ENCODE measurements at regions of chr16 and their contacts with region 1.

Region 1: DNA sequence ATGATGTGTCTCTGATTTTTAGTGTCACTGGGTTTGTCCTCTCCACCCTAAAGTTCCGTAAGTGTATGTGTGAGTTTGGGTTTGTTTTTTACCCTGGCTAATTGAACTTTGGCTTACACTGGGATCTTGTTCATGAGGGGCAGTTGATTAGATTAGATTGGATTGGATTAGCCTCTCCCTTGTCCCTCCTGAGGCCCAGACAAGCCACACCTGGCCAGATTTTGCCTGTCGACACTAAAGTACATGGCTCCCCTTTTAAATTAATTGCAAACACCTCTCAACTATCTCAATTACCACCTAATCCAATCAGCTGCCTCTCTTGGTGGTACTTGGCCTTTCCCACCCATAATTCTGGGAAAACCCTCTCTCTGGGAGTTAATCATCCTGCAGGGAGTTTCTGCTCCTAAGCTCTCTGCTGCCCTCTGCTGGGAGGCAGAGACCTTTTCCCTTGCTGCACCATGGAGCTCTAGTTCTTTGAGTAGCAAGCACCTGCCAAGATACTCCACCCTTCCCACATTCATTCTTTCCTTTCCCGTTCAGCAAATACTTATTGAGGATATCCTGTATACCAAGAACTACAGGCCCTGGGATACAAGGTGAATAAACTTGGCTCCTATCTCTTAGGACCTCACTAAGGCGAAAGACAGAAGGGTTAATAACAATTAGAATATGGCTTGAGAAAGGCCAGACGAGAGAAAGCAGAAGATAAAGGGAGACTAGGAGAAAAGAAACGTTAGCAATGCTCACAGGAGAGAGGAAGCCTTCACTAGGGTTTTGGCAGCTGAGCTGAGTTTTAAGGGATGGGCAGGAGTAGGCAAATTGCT is 60.0 kb upstream of the MPHOSPH6 start:
- DNase-seq: peak in 1 of 2 donors; percentile 56
- ATAC-seq: no peak
- H3K4me3 ChIP-seq: no peak overlapping the region
- H3K27ac ChIP-seq: no peak overlapping the region
- H3K4me1 ChIP-seq: no peaks in the 10 kb centered on the region
- H3K27me3 ChIP-seq: no peaks in the 10 kb centered on the region

Region 2: DNA sequence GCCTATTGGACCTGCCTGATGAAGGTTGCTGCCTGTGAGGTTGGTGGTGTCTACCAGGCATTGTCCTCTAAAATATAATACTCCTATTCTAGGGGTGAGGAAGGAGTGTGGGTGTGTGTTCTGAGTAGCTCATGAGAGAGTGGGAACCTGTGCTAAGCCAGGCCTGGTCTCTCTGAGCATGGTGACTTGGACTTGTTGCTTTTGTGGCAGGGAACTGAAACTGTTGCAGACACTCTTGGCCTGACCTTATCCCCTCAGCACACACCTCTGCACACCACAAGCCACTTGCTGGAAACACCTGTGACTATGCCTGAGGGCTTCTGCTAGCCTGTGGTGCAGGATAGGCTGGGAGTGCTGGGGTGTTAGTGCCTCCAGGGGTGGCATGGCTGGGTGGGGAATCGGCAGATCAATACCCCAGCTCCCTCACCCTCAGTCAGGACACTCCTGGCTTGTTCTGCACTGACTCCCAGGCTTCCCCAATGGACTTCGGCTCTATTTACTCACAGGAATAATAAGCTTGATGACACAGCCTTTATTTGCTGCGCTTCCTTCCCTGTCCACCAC is 421.0 kb before region 1 on chr16:
- intact Hi-C with region 1: no loop called
- DNase-seq: no peak
- ATAC-seq: no peak
- H3K4me3 ChIP-seq: no peak overlapping the region
- H3K27ac ChIP-seq: no peak overlapping the region
- H3K4me1 ChIP-seq: no peaks in the 10 kb centered on the region
- H3K27me3 ChIP-seq: no peaks in the 10 kb centered on the region

Region 3: DNA sequence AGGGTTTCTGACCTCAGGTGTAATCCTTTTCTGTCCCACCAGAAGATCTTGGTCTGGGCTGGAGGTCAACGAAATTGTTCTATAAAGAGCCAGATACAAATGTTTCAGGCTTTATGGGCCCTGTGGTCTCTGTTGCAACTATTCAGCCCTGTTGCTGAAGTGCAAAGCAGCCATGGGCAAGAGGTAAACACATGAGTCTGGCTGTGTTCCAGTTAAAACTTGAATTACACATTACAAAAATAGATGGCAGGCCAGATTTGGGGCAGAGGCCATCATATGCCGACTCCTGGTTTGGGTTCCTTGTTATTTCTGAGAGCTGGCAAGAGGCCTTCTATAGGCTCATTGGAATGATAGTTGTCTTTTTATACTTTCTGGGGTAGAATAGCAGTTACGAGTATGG is 333.1 kb before region 1 on chr16:
- intact Hi-C with region 1: loop called in 1 of 2 experiments (anchors 10 kb)
- DNase-seq: no peak
- ATAC-seq: no peak
- H3K4me3 ChIP-seq: no peak overlapping the region
- H3K27ac ChIP-seq: no peak overlapping the region
- H3K4me1 ChIP-seq: no peaks in the 10 kb centered on the region
- H3K27me3 ChIP-seq: peaks cover 0 to 2% of the 10 kb centered on the region in 2 donors

Region 4: DNA sequence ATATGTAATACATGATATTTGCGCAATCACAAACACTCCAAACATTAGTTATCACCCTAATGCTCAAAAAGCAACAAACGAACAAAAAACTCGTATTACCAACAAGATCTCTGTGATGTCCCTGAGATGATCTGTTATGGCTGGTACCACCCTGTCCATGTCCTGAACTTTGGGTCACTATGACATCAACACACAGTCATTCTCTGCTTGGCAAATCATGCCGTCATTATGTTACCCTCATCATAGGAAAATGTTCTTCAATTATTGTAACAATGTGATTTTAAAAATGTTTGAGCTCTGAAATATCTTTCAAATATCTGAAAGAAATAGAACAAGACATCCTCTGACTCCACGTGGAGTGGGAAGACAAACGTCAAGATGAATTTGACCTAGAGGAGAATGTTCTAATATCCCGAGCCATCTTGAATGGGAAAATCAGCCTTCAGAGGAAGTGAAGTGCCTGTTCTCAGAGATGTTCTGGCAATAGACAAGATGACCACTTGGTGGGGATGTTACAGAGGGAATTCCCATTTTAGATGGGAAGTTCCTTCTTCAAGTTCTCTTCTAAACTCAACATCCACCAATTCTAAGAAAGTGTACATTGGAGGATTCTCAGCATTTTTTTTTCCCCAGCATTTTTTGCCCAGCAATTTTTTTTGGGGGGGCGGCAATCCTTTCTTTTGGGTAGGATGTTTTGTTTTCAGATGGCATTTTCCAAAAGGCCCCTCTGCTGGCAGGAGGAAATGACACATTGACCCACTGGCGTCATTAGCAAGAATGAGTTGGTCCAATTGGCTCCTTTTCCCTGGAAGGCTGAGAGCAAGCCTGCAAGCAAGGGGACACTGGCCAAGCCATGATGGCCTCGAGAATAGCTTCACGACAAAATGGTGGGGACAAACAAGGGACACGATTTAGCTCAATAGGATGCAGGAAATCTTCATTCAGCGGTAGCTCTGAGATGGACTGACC is 198.6 kb before region 1 on chr16:
- intact Hi-C with region 1: no loop called
- DNase-seq: no peak
- ATAC-seq: no peak
- H3K4me3 ChIP-seq: no peak overlapping the region
- H3K27ac ChIP-seq: no peak overlapping the region
- H3K4me1 ChIP-seq: no peaks in the 10 kb centered on the region
- H3K27me3 ChIP-seq: no peaks in the 10 kb centered on the region